ENCODE measurements at regions of chr2 and their contacts with region 1.

Region 1: DNA sequence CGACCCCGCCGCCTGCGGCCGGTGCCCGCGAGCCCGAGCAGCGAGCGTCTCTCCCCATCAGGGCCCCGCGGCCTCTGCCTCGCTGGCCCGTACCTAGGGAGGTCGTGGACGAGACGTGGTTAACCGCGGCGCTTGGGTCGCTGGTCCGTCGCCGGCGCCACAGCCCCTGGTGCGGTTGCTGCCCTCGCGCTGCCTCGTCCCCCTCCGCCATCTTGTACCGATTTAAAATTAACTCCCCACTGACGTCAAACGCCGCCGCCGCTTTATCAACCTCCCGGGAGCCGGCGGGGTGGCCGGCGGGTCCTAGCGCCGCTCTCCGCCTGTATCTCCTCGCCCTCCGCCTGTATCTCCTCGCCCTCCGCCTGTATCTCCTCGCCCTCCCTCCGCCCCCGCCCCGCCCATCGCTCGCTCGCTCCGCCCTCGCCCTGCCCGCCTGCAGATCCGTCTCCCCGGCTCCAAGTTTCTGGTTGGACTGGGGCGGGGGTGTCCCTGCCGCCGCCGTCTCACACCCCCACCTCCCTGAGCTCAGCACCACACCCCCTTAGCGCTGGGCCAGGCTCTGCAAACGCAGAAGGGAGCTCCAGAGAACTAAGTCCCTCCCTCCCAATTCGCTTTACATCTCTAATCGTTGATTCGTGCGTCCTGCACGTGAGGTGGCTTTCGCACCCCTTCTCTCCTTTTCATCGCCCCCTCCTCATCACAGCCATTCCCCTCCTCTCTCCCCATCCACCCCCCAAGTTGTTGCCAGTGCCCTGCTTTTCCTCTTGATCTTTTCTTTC is at the start of gene ATL2:
- DNase-seq: peak; percentile 95 to 97
- H3K4me3 ChIP-seq: peak within 1 kb of the TSS; percentile 74 to 96
- H3K27ac ChIP-seq: peak within 1 kb of the TSS; percentile 95 to 100
- H3K4me1 ChIP-seq: peaks cover 0 to 32% (median 23%) of the 10 kb centered on the region in 4 donors
- H3K27me3 ChIP-seq: no peaks in the 10 kb centered on the region
- CTCF ChIP-seq: no peak

Region 2: DNA sequence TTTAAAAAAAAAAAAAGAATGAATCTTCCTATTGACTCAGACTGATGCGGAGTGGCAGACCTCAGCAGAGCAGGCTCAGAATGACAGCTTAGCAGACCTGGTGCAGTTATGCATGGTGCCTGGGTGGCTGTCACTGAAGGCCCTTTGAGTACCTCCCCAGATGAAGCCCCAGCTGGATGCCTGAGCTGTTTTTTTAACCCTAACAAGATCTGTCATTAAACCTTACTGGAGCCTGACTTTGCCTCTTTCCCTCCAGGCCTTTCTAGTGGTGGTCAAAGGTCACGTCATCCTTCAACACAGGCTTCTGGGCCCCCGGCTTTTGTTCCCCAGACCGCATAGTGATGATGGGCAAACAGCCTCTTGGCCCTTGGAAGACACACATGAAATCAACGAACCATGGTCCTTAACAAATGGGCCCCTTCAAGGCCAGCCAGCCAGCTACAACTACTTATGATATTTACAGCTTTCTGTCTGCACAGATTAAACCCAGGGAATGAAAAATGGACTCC is 163.0 kb before region 1 on chr2:
- intact Hi-C with region 1: no loop called
- DNase-seq: no peak
- H3K4me3 ChIP-seq: no peak overlapping the region
- H3K27ac ChIP-seq: no peak overlapping the region
- H3K4me1 ChIP-seq: no peaks in the 10 kb centered on the region
- H3K27me3 ChIP-seq: peaks cover 0 to 3% of the 10 kb centered on the region in 2 donors
- CTCF ChIP-seq: no peak

Region 3: DNA sequence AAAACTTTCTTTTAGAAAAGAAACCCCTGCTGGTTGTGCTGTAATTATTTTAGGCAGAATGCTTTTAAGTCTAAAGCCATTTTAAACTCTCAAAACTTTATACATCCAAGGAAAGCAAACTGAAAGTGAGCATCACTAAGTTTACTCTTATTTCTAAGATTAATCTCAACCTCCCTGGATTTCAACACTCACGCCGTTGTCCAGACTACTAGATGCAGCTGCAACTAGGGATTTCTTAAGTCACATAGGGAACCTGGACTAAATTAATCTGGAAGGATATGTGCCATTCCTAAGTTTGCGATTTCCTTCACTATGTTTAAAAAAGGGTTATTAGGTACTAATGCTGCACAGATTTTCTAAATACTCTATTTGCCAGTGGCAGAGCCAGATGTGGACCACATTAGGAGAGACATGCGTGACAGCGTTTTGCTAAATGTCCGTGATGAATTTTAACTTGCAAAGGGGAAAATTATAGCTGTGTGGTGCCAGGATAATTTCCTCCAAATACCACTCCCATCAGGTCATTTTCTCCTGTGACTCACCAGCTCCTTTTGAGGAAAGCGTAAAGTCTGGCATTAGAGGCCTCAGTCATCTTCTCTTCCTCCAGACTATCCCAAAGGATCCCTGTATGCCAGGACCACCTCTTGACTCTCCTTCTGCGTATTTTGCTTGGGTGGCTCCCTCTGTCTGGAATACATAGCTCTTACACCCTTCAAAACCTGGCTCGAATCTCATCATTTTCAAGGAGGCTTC is 143.8 kb before region 1 on chr2:
- intact Hi-C with region 1: no loop called
- DNase-seq: peak in 1 of 2 donors; percentile 30
- H3K4me3 ChIP-seq: no peak overlapping the region
- H3K27ac ChIP-seq: peak overlapping the region in 1 of 2 donors; percentile 5
- H3K4me1 ChIP-seq: peaks cover 0 to 7% (median 1%) of the 10 kb centered on the region in 4 donors
- H3K27me3 ChIP-seq: no peaks in the 10 kb centered on the region
- CTCF ChIP-seq: peak in 1 of 2 experiments; percentile 18

Region 4: DNA sequence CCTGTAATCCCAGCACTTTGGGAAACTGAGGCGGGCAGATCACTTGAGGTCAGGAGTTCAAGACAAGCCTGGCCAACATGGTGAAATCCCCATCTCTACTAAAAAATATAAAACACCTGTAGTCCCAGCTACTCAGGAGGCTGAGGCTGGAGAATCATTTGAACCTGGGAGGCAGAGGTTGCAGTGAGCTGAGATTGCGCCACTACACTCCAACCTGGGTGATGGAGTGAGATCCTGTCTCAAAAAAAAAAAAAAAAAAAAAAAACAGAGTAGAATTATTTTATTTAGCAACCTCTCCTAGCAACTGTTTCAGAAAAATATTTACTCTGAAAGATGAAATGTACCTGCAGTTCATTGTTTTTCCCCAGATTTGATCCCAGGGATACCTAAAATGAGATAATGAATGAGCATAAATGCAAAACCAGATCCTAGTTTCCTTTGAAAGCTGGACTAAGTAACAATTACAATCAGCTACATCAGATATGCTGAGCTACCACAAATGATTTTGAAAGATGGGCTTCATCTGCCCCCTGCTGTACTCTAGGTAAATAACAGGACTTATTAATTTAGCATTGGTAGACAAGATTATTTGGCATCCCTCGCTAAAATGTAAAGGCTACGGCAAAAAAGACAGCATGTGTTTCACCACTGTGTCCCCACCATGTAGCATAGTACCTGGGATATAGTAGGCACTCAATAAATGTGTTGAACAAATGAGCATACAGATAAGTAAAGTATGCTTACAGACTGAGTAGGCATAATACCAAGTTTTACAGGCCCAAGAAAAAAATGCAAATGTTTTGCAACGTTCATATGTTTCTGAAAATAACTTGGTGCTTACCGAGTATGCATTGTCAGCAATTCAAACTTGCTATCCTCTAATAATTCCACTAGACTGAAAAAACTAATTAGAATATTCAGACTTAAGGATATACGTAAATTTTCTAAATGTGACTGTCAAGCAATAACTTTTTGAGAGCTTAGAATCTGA is 102.7 kb before region 1 on chr2:
- intact Hi-C with region 1: no loop called
- DNase-seq: no peak
- H3K4me3 ChIP-seq: no peak overlapping the region
- H3K27ac ChIP-seq: no peak overlapping the region
- H3K4me1 ChIP-seq: no peaks in the 10 kb centered on the region
- H3K27me3 ChIP-seq: no peaks in the 10 kb centered on the region
- CTCF ChIP-seq: peak; percentile 59 to 95

Region 5: DNA sequence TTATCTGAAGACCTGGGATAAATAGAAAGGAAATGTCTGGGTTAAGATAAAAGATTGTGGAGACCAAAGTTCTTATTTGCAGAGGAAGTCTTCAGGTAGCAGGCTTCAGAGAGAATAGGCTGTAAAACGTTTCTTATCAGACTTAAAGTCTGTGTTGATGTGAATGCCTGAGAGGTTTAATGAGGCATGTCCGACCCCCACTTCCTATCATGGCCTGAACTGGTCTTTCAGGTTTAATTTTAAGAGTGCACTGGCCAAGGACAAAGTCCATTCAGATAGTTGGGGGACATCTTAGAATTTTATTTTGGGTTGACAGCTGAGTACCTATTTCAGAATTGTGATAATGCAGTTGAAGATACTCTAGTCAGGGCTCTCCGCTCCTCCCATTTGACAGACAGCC is 92.3 kb before region 1 on chr2:
- intact Hi-C with region 1: no loop called
- DNase-seq: no peak
- H3K4me3 ChIP-seq: no peak overlapping the region
- H3K27ac ChIP-seq: no peak overlapping the region
- H3K4me1 ChIP-seq: no peaks in the 10 kb centered on the region
- H3K27me3 ChIP-seq: peaks cover 0 to 20% of the 10 kb centered on the region in 2 donors
- CTCF ChIP-seq: no peak

Region 6: DNA sequence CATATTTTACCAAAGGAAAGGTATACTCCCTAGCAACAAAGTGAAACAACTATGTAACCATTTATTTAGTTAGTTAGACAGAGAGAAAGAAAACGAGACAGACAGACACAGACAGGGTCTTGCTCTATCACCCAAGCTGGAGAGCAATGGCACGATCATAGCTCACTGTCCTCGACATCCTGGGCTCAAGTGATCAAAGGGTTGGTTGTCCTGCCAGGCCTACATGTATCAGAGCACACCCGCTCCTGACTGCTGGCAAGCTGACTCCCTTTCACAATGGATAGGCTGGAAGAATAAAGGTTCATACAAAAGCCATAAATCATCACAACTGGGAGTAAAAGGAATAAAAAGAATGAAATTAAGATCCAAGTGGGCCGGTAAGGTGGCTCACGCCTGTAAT is 53.6 kb before region 1 on chr2:
- intact Hi-C with region 1: loop called (anchors 10 kb)
- DNase-seq: no peak
- H3K4me3 ChIP-seq: no peak overlapping the region
- H3K27ac ChIP-seq: no peak overlapping the region
- H3K4me1 ChIP-seq: peaks cover 0 to 7% (median 0%) of the 10 kb centered on the region in 4 donors
- H3K27me3 ChIP-seq: no peaks in the 10 kb centered on the region
- CTCF ChIP-seq: no peak

Region 7: DNA sequence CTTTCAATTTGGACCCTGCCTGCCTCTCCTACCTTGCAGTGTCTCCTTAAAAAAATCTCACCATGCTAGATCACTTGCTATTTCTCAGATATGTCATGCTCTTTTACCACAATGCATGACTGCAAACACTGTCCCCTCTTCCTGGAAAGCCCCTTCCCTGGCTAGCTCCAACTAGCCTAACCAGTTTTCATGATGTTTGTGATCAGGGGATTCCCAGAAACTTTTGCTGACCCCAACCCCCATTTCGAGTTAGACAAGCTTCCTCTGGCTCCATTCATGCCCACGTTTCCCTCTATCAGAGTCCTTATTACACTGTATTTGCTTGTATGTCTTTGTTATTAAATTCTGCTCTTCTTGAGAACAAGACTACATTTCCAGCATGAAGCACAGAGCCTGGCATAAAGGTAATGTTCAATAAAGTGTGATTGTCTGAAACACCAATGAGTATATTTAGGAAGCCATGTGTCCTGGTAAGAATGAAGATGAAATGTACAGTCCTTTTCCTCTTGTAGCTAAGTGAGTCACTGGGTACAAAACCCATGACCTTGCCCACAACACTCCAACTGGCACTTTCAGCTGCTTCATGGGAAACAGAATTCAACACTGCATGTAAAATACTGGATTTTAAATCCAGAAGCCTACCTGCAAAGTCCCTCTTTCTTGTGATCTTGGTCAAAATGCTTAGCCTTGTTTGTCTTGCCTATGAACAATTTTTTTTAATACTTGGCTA is 61.8 kb after region 1 on chr2:
- intact Hi-C with region 1: loop called (anchors 10 kb)
- DNase-seq: no peak
- H3K4me3 ChIP-seq: no peak overlapping the region
- H3K27ac ChIP-seq: no peak overlapping the region
- H3K4me1 ChIP-seq: peaks cover 0 to 31% (median 10%) of the 10 kb centered on the region in 4 donors
- H3K27me3 ChIP-seq: no peaks in the 10 kb centered on the region
- CTCF ChIP-seq: no peak